ENCODE measurements at regions of chr4 and their contacts with region 1.

Region 1: GRCh38 chr4:21205821-21206531 is 505.7 kb downstream of the PACRGL start:
- DNase-seq: peak; percentile 82 to 86
- H3K4me3 ChIP-seq: no peak overlapping the region
- H3K4me3 Mint-ChIP-seq: peak overlapping the region; percentile 7
- H3K27ac Mint-ChIP-seq: no peak overlapping the region
- H3K4me1 ChIP-seq: peaks cover 18% of the 10 kb centered on the region
- H3K4me1 Mint-ChIP-seq: peaks cover 12% of the 10 kb centered on the region
- H3K27me3 ChIP-seq: no peaks in the 10 kb centered on the region
- H3K27me3 Mint-ChIP-seq: no peaks in the 10 kb centered on the region
- CTCF ChIP-seq: no peak

Region 2: DNA sequence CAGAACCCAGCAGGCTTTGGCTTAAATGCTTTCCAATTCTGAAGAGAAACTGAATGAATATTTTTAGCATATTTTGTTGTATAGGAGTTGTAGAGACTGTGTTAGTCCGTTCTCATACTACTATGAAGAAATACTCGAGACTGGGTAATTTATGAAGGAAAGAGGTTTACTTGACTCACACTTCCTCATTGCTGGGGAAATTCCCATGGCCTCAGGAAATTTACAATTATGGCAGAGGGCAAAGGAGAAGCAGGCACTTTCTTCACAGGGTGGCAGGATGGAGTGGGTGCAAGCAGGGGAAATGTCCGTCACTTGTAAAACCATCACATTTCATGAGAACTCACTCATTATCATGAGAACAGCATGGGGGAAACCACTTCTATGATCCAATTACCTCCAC is 214.0 kb before region 1 on chr4:
- CTCF ChIA-PET with region 1: no interaction called
- POLR2A ChIA-PET with region 1: no interaction called
- intact Hi-C with region 1: no loop called
- DNase-seq: no peak
- H3K4me3 ChIP-seq: no peak overlapping the region
- H3K4me3 Mint-ChIP-seq: no peak overlapping the region
- H3K27ac Mint-ChIP-seq: no peak overlapping the region
- H3K4me1 ChIP-seq: no peaks in the 10 kb centered on the region
- H3K4me1 Mint-ChIP-seq: no peaks in the 10 kb centered on the region
- H3K27me3 ChIP-seq: no peaks in the 10 kb centered on the region
- H3K27me3 Mint-ChIP-seq: no peaks in the 10 kb centered on the region
- CTCF ChIP-seq: no peak

Region 3: DNA sequence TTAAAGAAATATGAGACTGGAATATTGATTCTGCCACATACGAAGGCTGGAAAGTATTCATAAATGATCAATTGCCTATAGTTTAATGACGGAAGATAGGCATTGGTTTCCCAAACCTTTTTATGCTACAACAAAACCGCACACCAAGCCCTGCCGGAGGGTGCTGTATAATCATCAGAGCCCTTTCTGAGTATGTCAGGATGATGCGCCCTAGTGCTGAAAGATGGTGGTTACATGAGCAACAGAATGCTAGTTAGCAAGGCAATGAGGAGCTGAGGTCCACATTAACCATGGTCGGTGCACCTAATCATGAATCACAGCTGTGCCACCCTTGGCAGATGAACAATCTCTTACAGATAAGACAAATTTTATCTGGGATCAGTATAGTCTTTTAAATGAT is 14.7 kb before region 1 on chr4:
- CTCF ChIA-PET with region 1: no interaction called
- POLR2A ChIA-PET with region 1: no interaction called
- intact Hi-C with region 1: loop called (anchors 2 kb)
- DNase-seq: no peak
- H3K4me3 ChIP-seq: no peak overlapping the region
- H3K4me3 Mint-ChIP-seq: no peak overlapping the region
- H3K27ac Mint-ChIP-seq: no peak overlapping the region
- H3K4me1 ChIP-seq: no peaks in the 10 kb centered on the region; the same call in 1 of the 2 replicates
- H3K4me1 Mint-ChIP-seq: no peaks in the 10 kb centered on the region
- H3K27me3 ChIP-seq: no peaks in the 10 kb centered on the region
- H3K27me3 Mint-ChIP-seq: no peaks in the 10 kb centered on the region
- CTCF ChIP-seq: no peak

Region 4: DNA sequence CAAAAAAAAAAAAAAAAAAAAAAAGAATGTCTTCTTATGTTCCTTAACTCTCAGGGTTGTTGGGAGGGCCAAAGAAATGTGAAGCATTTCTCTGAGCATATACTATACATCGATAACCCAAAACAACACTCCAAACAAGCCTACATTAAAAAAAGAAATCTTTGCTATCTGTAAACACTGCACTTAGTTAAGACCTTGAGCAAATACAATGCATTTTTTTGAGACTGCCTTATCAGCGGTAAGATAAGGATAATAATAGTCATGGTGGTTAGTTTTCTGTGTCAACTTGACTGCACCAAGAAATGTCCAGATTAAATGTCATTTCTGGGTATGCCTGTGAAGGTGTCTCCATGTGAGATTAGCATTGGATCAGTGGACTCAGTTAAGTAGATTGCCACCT is 36.2 kb after region 1 on chr4:
- CTCF ChIA-PET with region 1: no interaction called
- POLR2A ChIA-PET with region 1: interaction called, 4 read pairs
- intact Hi-C with region 1: loop called (anchors 1 kb)
- DNase-seq: peak; percentile 41 to 58
- H3K4me3 ChIP-seq: no peak overlapping the region
- H3K4me3 Mint-ChIP-seq: no peak overlapping the region
- H3K27ac Mint-ChIP-seq: peak overlapping the region; percentile 57
- H3K4me1 ChIP-seq: peaks cover 17% of the 10 kb centered on the region
- H3K4me1 Mint-ChIP-seq: peaks cover 6% of the 10 kb centered on the region
- H3K27me3 ChIP-seq: no peaks in the 10 kb centered on the region
- H3K27me3 Mint-ChIP-seq: no peaks in the 10 kb centered on the region
- CTCF ChIP-seq: no peak

Region 5: DNA sequence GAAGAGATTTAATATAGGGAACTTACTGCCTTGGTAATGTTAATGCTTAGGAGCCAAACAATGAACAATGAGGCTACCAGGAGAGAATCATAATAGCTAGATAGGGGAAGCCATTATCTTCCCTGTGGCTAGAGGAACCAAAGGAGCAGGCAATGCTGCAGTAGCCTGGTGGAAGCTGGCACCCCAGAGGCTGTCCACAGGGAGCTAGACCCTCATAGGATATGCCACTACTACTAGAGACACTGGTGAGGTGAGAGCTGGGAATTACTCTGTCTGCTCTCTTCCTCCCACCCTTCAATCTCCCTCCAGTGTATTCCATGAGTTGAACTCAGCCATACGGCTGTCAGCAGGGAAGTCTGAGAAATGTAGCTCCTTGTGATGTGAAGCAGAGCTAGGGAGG is 141.2 kb after region 1 on chr4:
- CTCF ChIA-PET with region 1: no interaction called
- POLR2A ChIA-PET with region 1: no interaction called
- intact Hi-C with region 1: no loop called
- DNase-seq: no peak
- H3K4me3 ChIP-seq: no peak overlapping the region
- H3K4me3 Mint-ChIP-seq: no peak overlapping the region
- H3K27ac Mint-ChIP-seq: no peak overlapping the region
- H3K4me1 ChIP-seq: no peaks in the 10 kb centered on the region
- H3K4me1 Mint-ChIP-seq: no peaks in the 10 kb centered on the region
- H3K27me3 ChIP-seq: no peaks in the 10 kb centered on the region
- H3K27me3 Mint-ChIP-seq: no peaks in the 10 kb centered on the region
- CTCF ChIP-seq: no peak